Activated CD4-positive, alpha-beta memory T cell treated with anti-CD3 and anti-CD28 coated beads for 36 hours (primary cell): ENCODE measurements at regions of chr10 and their contacts with region 1.

Region 1: DNA sequence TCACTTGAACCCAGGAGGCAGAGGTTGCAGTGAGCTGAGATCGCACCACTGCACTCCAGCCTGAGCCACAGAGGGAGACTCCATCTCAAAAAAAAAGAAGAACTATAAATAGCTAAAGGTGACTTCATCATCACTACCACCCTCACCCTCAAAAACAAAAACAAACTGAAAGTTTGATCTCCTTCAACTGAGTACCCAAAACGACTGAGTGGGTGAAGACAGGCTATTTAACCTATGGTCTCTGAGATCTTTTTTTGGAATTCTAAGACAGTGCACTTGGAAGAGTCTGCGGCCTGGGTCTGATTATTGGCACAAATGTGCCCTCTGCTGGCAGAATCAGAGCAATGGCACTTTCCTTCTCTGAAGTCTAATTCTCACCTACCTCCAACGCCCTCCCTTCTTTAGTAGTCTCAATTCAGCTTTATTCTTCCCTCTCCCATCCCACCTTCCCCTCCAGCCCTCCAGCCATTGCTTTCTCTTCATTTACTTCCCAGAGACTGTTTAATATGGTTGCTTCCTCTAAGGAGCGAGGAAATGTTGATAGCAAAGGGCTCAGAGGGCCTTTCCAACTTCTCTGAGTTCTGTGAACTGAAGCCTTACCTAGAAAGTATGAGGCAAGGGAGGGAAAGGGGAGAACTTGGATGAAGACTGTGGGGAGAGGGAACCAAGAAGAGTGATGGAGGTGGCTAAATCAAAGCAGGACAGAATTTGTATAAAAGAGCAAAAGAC is 2.9 kb upstream of the MYOZ1 start:
- DNase-seq: peak; percentile 59
- H3K4me3 Mint-ChIP-seq: no peak overlapping the region
- H3K27ac Mint-ChIP-seq: no peak overlapping the region
- H3K4me1 Mint-ChIP-seq: peaks cover 15% of the 10 kb centered on the region
- H3K27me3 Mint-ChIP-seq: no peaks in the 10 kb centered on the region

Region 2: GRCh38 chr10:73252445-73253224 is 391.5 kb before region 1 on chr10 and contains the start of gene MRPS16:
- CTCF ChIA-PET with region 1: interaction called, 12 read pairs
- POLR2A ChIA-PET with region 1: interaction called, 3 read pairs
- intact Hi-C with region 1: no loop called
- DNase-seq: peak; percentile 96
- H3K4me3 Mint-ChIP-seq: peak within 1 kb of the TSS; percentile 97
- H3K27ac Mint-ChIP-seq: peak within 1 kb of the TSS; percentile 98
- H3K4me1 Mint-ChIP-seq: peaks cover 38% of the 10 kb centered on the region
- H3K27me3 Mint-ChIP-seq: no peaks in the 10 kb centered on the region
- total RNA-seq, gene MRPS16: 136 to 139 TPM

Region 3: GRCh38 chr10:73263948-73264347 is 380.2 kb before region 1 on chr10:
- CTCF ChIA-PET with region 1: interaction called, 5 read pairs
- POLR2A ChIA-PET with region 1: no interaction called
- intact Hi-C with region 1: loop called (anchors 1 kb)
- DNase-seq: no peak
- H3K4me3 Mint-ChIP-seq: no peak overlapping the region
- H3K27ac Mint-ChIP-seq: no peak overlapping the region
- H3K4me1 Mint-ChIP-seq: peaks cover 4% of the 10 kb centered on the region
- H3K27me3 Mint-ChIP-seq: no peaks in the 10 kb centered on the region

Region 4: GRCh38 chr10:73529089-73529832 is 114.9 kb before region 1 on chr10:
- CTCF ChIA-PET with region 1: interaction called, 219 read pairs
- POLR2A ChIA-PET with region 1: no interaction called
- intact Hi-C with region 1: loop called (anchors 1 kb)
- DNase-seq: peak; percentile 44
- H3K4me3 Mint-ChIP-seq: no peak overlapping the region
- H3K27ac Mint-ChIP-seq: no peak overlapping the region
- H3K4me1 Mint-ChIP-seq: no peaks in the 10 kb centered on the region
- H3K27me3 Mint-ChIP-seq: no peaks in the 10 kb centered on the region

Region 5: GRCh38 chr10:73625884-73626752 is 18.1 kb before region 1 on chr10:
- CTCF ChIA-PET with region 1: interaction called, 16 read pairs
- POLR2A ChIA-PET with region 1: no interaction called
- intact Hi-C with region 1: no loop called
- DNase-seq: peak; percentile 96
- H3K4me3 Mint-ChIP-seq: peak overlapping the region; percentile 94
- H3K27ac Mint-ChIP-seq: peak overlapping the region; percentile 93
- H3K4me1 Mint-ChIP-seq: peaks cover 17% of the 10 kb centered on the region
- H3K27me3 Mint-ChIP-seq: no peaks in the 10 kb centered on the region